ENCODE measurements at regions of chr1 and their contacts with region 1.

Region 1: DNA sequence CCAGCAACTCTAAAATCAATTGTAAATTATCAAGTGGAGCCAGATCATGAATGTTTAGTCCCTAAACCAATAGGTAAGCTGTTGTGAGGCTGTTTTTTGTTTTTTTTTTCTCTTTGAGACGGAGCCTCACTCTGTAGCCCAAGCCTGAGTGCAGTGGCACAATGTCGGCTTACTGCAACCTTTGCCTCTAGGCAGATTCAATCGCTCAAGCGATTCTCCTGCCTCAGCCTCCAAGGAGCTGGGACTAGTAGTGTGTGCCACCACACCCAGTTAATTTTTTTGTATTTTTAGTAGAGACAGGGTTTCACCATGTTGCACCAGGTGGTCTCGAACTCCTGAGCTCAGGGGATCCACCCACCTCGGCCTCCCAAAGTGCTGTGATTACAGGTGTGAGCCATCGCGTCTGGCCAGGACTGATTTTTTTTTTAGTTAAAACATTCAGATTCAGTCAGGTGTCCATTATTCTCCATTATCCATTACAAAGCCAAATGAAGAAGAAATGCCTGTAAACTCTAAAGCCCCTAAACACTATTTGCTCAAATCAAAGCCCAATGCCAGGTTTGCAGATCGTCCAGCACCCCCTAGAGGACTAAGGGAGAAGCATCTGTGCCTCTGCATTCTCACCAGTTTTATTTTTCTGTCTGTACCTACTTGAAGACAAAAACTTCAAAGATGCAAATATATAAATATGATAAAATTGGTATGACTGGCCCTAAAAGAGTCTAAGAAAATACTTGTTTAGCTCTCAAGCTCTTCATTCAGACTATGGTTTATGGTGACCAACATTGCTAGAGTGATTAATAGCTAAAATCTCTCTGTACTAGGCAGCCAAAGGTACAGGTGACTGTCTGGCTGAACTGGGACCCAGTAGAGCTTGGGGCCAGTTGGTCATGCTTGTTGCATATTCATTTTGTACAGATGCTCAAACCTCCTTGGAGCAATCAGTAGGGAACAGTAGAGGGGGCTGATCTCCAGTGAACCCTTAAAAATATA is 138.6 kb downstream of the SYT2 start:
- DNase-seq: peak in 1 of 2 donors; percentile 26
- ATAC-seq: peak; percentile 70

Region 2: GRCh38 chr1:202501281-202501680 is 70.4 kb before region 1 on chr1:
- intact Hi-C with region 1: loop called in 1 of 2 experiments (anchors 10 kb)
- DNase-seq: no peak
- ATAC-seq: peak; percentile 53